Right cardiac atrium (tissue), 5 donors: ENCODE measurements at regions of chr14 and their contacts with region 1.

Region 1: GRCh38 chr14:68248481-68249255 is 429.1 kb downstream of the RAD51B start:
- DNase-seq: peak; percentile 17 to 69 (median 68)
- ATAC-seq: peak; percentile 71 to 73
- H3K4me3 ChIP-seq: no peak overlapping the region
- H3K27ac ChIP-seq: peak overlapping the region; percentile 77
- H3K4me1 ChIP-seq: peaks cover 20% of the 10 kb centered on the region
- H3K27me3 ChIP-seq: no peaks in the 10 kb centered on the region

Region 2: DNA sequence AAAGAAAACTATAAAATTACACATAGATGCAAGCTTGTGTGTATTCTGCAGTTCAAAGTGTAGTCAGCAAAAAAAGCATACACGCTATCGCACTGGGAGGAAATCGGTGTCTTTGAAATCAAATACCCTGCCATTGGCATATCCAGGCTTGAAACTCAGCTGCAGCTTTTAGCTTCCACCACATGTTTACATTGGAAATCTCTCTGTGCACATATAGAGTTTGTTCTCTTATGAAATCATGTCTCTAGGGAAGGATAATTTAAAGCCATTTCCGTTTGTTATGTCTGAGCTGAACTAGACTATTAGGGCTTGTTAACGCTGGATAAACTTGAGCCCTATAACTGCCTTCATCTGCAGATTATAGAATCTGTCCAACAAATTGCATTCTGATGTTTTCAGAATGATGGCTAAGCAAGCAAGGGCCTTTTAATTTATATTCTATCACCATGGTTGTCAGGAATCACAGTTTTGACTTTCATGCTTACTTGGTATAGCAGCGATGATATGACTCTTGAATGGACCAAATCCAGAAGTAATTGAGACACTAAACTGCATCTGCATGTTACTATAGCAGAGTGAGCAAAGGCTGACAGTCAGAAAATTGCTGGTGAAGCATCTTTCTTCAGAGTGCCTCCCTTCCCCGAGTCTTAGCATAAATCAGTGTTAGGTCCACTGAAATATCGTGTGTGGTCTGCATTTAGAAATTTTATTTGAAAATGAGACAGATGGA is 101.4 kb after region 1 on chr14:
- intact Hi-C with region 1: no loop called
- DNase-seq: no peak
- ATAC-seq: no peak
- H3K4me3 ChIP-seq: no peak overlapping the region
- H3K27ac ChIP-seq: no peak overlapping the region
- H3K4me1 ChIP-seq: no peaks in the 10 kb centered on the region
- H3K27me3 ChIP-seq: no peaks in the 10 kb centered on the region

Region 3: DNA sequence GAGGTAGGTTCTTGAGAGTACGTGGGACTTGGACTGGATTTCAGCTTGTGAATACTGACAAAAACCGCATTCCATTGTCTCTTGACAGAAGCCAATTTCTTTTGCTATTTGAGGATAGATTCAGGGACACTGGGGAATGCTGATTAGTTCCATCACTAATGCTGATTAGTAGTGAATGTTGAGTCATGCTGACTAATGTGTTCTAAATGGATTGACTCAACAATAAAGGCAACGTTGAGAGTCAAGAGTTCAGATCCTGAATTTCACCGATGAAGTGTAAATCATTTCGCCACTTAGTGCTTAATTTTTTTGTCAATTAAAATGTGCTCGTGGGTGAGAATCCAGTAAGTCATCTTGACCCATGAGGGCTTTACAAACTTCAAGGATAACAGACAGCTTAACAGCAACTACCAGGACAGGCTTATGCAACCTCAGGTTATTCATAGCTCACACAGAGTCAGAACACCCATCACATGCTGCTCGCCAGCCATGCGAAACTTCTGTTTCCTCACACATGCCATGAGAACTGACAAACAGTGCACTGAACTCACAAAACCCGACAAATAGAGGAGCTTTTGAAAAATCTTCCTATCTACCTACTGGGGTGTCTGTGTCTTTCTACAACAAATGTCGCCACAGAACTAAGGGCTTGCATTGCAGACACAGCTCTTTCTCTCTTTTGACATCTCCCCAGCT is 227.7 kb after region 1 on chr14:
- intact Hi-C with region 1: no loop called
- DNase-seq: peak; percentile 60 to 72 (median 66)
- ATAC-seq: peak; percentile 83 to 90
- H3K4me3 ChIP-seq: no peak overlapping the region
- H3K27ac ChIP-seq: peak overlapping the region; percentile 56
- H3K4me1 ChIP-seq: peaks cover 7% of the 10 kb centered on the region
- H3K27me3 ChIP-seq: no peaks in the 10 kb centered on the region

Region 4: DNA sequence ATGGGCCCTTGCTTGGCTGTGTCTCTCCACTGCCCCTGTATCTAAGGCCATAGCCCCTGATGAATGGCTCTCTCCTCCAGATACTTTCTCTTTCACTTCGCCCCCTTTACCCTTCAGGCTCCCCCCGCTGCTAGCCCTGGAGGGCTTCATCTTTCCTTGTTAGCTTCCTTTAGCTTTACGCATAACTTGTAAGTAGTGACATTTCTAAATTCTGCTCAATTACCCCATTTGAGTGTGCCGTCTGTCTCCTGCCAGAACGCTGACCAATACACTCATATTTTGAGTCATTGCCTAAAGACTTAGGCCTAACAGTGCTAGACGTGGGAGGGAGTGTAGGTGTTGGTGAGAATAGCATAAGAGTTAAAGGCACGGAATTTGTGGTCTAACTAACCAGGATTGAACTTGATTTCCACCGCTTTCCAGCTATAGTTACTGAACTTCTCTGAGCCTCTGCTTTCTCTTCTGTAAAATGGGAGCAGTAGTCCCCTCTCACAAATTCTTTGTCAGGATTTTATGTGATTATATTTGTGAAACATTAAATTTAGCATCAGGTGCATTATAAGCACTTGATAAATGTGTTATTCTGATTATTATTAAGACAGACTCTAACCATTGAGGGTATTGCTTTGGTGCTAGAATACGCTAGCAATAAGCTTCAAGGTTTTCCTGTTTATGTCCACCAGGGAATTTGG is 414.9 kb after region 1 on chr14:
- intact Hi-C with region 1: loop called in 1 of 4 experiments (anchors 10 kb)
- DNase-seq: no peak
- ATAC-seq: no peak
- H3K4me3 ChIP-seq: no peak overlapping the region
- H3K27ac ChIP-seq: no peak overlapping the region
- H3K4me1 ChIP-seq: peaks cover 12% of the 10 kb centered on the region
- H3K27me3 ChIP-seq: no peaks in the 10 kb centered on the region

Region 5: DNA sequence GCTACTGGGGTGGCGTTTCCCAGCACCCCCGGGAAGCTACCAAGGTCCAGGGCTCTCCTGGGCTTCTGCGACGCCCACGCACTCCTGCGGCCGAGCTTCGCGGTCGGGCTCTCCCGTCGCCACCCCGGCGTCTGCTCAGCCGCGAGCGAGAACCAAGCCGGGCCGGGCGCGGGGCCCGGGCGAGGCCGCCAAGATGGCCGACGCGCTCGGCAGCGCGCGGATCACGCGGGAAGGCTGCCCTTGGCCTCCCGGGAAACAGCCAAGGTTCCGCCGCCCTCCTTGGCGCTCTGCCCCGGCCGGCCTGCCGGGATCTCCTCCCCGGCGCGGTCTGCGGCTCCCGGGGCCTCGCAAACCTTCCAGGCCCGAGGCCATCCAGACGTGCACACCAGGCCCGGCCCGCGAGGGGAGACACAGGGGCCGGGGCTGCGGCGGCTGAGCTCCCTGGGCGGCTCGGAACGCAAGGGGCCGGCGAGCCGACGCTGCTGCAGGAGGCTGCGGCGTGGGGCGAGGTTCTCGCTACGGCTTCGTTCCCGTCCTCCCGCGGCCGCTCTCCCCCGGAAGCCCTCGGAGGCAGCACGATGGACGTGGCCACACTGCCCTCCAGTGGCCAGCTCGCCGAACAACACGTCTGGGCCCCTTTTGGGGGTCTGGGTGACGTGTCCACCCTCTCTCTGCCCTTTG is 567.7 kb after region 1 on chr14:
- intact Hi-C with region 1: loop called (anchors 5 kb)
- DNase-seq: peak; percentile 91 to 97 (median 97)
- ATAC-seq: peak; percentile 92 to 94
- H3K4me3 ChIP-seq: peak overlapping the region; percentile 18
- H3K27ac ChIP-seq: peak overlapping the region; percentile 91
- H3K4me1 ChIP-seq: peaks cover 20% of the 10 kb centered on the region
- H3K27me3 ChIP-seq: no peaks in the 10 kb centered on the region